HEK293 (cell line): ENCODE measurements at regions of chr10 and their contacts with region 1.

Region 1: GRCh38 chr10:70221030-70221429 is 12.2 kb downstream of the PPA1 start:
- H3K4me3 ChIP-seq: no peak overlapping the region
- H3K27ac ChIP-seq: no peak overlapping the region
- H3K4me1 ChIP-seq: no peaks in the 10 kb centered on the region
- CTCF ChIP-seq: no peak

Region 2: DNA sequence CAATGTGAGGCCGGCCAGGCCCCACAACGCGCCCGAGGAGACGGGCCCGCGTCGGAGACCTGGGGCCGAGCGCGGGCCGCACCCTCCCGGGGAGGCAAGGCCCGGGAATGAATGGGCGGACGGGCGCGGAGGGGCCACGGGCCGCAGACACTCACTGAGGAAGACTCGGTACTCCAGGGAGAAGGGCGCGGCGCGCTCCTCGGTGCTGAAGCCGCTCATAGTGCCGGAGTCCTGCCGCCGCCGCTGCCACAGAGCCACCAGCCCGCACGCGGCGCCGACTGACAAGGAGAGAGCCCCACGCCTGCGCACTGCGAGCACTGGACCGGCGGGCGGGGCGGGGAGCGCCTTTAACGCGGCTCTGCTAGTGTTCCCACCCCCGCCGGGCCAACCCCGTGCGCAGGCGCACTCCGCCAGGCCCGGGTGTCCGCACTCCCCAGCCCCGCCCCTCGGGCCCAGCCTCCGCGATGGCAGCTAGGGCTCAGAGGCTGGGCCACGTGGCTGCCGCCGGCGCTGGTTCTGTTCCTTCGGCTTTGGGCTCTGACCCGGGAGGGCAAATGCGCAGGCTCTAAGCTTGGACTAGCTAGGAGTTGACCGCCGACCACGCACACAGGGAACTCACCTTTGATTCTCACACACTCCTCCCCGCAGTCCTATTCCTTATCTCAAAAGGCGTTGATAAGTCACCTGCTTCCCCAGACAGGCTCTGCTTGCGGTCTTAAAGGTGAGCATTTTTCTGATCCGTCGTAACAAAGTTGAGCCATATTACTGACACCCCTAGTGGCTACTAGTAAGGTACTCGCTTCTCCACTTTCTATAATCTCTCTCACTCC is 12.3 kb after region 1 on chr10 and contains the start of gene PPA1:
- CTCF ChIA-PET with region 1: interaction called, 32 read pairs
- POLR2A ChIA-PET with region 1: interaction called, 22 read pairs
- H3K4me3 ChIP-seq: peak within 1 kb of the TSS; percentile 87
- H3K27ac ChIP-seq: peak within 1 kb of the TSS; percentile 87
- H3K4me1 ChIP-seq: no peaks in the 10 kb centered on the region
- CTCF ChIP-seq: peak; percentile 14; the same call in 1 of the 2 replicates

Region 3: GRCh38 chr10:70348228-70348850 is 127.3 kb after region 1 on chr10:
- CTCF ChIA-PET with region 1: interaction called, 76 read pairs
- POLR2A ChIA-PET with region 1: interaction called, 7 read pairs
- H3K4me3 ChIP-seq: no peak overlapping the region
- H3K27ac ChIP-seq: no peak overlapping the region
- H3K4me1 ChIP-seq: no peaks in the 10 kb centered on the region
- CTCF ChIP-seq: 0 out of 2 replicates have a peak, but pooled peaks have one; percentile 29

Region 4: GRCh38 chr10:70355051-70356021 is 134.3 kb after region 1 on chr10:
- CTCF ChIA-PET with region 1: interaction called, 177 read pairs
- POLR2A ChIA-PET with region 1: no interaction called
- H3K4me3 ChIP-seq: no peak overlapping the region
- H3K27ac ChIP-seq: no peak overlapping the region
- H3K4me1 ChIP-seq: no peaks in the 10 kb centered on the region
- CTCF ChIP-seq: no peak

Region 5: DNA sequence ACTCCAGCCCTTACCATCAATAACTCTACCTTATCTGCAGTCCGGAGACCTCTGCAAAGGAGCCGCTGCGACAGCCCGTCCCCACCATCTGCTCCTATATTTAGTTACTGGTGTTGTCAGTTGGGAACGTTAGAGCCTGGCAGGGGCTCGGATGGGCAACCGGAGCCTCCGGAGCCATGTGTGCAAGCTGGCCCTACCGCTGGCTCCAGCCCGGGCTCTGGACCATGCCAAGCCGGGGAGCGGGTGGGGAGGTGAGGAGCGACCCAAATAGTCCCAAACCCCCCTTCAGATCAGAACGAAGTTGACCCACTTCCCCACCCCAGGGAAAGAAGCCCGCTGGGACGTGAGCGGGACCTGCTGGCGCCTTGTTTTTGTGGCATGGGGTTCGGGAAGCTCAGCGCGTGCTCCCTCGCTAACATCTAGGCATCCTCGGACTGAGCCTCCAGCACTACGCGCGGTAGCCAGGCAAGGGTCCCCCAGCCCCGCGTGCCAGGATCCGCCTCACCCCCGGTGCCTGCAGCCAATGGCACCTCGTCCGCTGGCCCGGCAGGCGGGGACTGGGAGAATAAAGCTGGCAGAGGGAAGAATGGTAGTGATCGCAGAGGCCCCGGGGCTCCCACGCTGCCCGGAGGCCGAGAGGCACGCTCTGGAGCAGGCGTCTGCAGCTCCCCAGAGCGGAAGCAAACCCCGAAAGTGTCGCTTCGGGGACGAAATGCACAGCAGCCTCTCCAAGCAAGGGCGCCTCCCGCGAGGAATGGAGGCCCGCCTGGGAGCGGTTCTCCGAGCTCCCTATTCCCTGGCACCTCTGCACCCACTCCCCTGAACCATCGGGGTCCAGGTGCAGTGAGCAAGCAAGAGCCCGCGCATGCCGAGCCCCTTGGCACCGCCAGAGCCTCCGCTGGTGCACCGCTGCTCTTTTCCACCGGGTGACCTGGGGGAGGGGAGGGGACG is 160.7 kb after region 1 on chr10:
- CTCF ChIA-PET with region 1: interaction called, 39 read pairs
- POLR2A ChIA-PET with region 1: interaction called, 5 read pairs
- H3K4me3 ChIP-seq: peak overlapping the region; percentile 57
- H3K27ac ChIP-seq: peak overlapping the region; percentile 46; the same call in 1 of the 2 replicates
- H3K4me1 ChIP-seq: peaks cover 3% of the 10 kb centered on the region; the same call in 1 of the 2 replicates
- CTCF ChIP-seq: no peak